B cell (primary cell): ENCODE measurements at regions of chr7 and their contacts with region 1.

Region 1: GRCh38 chr7:21945454-21946227 is at the start of gene CDCA7L:
- DNase-seq: peak; percentile 96
- ATAC-seq: peak; percentile 80
- H3K4me3 ChIP-seq: peak within 1 kb of the TSS; percentile 74 to 95 (median 81)
- H3K4me3 Mint-ChIP-seq: peak within 1 kb of the TSS; percentile 97
- H3K27ac ChIP-seq: peak within 1 kb of the TSS; percentile 97 to 98
- H3K27ac Mint-ChIP-seq: peak within 1 kb of the TSS; percentile 99
- H3K4me1 ChIP-seq: peaks cover 56 to 63% of the 10 kb centered on the region in 2 donors
- H3K4me1 Mint-ChIP-seq: peaks cover 65% of the 10 kb centered on the region
- H3K27me3 ChIP-seq: no peaks in the 10 kb centered on the region
- H3K27me3 Mint-ChIP-seq: no peaks in the 10 kb centered on the region
- CTCF ChIP-seq: peak; percentile 17
- total RNA-seq, gene CDCA7L: 126 and 129 TPM in 2 replicates

Region 2: GRCh38 chr7:21898265-21898930 is 47.2 kb before region 1 on chr7:
- CTCF ChIA-PET with region 1: interaction called, 6 read pairs
- POLR2A ChIA-PET with region 1: interaction called, 14 read pairs
- intact Hi-C with region 1: loop called (anchors 2 kb)
- DNase-seq: peak; percentile 78
- ATAC-seq: peak; percentile 90
- H3K4me3 ChIP-seq: peak overlapping the region; percentile 12 to 55 (median 31)
- H3K4me3 Mint-ChIP-seq: peak overlapping the region; percentile 90
- H3K27ac ChIP-seq: peak overlapping the region; percentile 78 to 96
- H3K27ac Mint-ChIP-seq: peak overlapping the region; percentile 97
- H3K4me1 ChIP-seq: peaks cover 24 to 25% of the 10 kb centered on the region in 2 donors
- H3K4me1 Mint-ChIP-seq: peaks cover 33% of the 10 kb centered on the region
- H3K27me3 ChIP-seq: no peaks in the 10 kb centered on the region
- H3K27me3 Mint-ChIP-seq: no peaks in the 10 kb centered on the region
- CTCF ChIP-seq: no peak

Region 3: DNA sequence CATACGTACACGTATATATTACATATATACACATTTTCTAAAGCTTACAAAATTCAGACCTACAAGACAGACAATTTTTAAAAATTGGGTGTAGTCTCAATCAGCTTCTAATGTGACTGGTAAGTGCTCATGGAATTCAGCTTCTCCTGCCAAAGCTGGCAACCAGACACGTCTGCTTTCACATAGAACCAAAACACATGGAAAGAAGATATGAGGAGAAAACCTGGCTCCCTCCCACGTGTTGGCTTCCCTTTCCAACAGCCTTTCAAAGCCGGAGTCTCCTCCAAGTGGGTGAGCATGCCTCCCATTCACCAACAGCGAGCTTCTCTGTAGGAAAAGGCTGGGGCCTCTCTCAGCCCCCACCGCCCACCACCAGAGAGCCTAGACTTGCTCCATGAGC is 33.3 kb before region 1 on chr7:
- CTCF ChIA-PET with region 1: interaction called, 3 read pairs
- POLR2A ChIA-PET with region 1: interaction called, 7 read pairs
- intact Hi-C with region 1: loop called (anchors 5 kb)
- DNase-seq: no peak
- ATAC-seq: no peak
- H3K4me3 ChIP-seq: no peak overlapping the region
- H3K4me3 Mint-ChIP-seq: no peak overlapping the region
- H3K27ac ChIP-seq: peak overlapping the region in 1 of 2 donors; percentile 64
- H3K27ac Mint-ChIP-seq: peak overlapping the region; percentile 69
- H3K4me1 ChIP-seq: peaks cover 29 to 30% of the 10 kb centered on the region in 2 donors
- H3K4me1 Mint-ChIP-seq: peaks cover 37% of the 10 kb centered on the region
- H3K27me3 ChIP-seq: no peaks in the 10 kb centered on the region
- H3K27me3 Mint-ChIP-seq: no peaks in the 10 kb centered on the region
- CTCF ChIP-seq: no peak

Region 4: DNA sequence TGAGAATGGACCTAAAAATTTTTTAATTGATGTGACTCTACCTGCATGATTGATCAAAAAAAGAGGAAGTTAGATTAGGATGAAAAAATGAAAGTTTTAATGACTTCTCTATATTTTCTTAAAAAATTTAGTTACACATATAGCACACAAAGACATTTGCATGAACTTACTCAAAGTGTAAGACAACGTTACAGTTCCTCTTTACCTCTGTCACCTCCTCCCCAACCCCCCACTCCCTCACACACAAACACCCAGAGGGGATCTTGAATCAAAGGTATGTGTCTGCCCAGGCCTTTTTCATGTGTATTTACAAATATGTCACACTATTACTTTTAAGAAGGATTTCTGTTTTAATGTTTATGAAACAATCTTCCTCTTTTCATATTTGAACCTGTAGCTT is 20.6 kb after region 1 on chr7:
- CTCF ChIA-PET with region 1: interaction called, 5 read pairs
- POLR2A ChIA-PET with region 1: interaction called, 19 read pairs
- intact Hi-C with region 1: loop called (anchors 1 kb)
- DNase-seq: peak; percentile 85
- ATAC-seq: peak; percentile 96
- H3K4me3 ChIP-seq: peak overlapping the region in 1 of 5 experiments; percentile 38
- H3K4me3 Mint-ChIP-seq: peak overlapping the region; percentile 79
- H3K27ac ChIP-seq: peak overlapping the region; percentile 80 to 85
- H3K27ac Mint-ChIP-seq: peak overlapping the region; percentile 93
- H3K4me1 ChIP-seq: peaks cover 52 to 55% of the 10 kb centered on the region in 2 donors
- H3K4me1 Mint-ChIP-seq: peaks cover 58% of the 10 kb centered on the region
- H3K27me3 ChIP-seq: no peaks in the 10 kb centered on the region
- H3K27me3 Mint-ChIP-seq: no peaks in the 10 kb centered on the region
- CTCF ChIP-seq: no peak

Region 5: GRCh38 chr7:21984042-21984441 is 38.4 kb after region 1 on chr7:
- CTCF ChIA-PET with region 1: no interaction called
- POLR2A ChIA-PET with region 1: no interaction called
- intact Hi-C with region 1: no loop called
- DNase-seq: no peak
- ATAC-seq: no peak
- H3K4me3 ChIP-seq: no peak overlapping the region
- H3K4me3 Mint-ChIP-seq: no peak overlapping the region
- H3K27ac ChIP-seq: no peak overlapping the region
- H3K27ac Mint-ChIP-seq: no peak overlapping the region
- H3K4me1 ChIP-seq: no peaks in the 10 kb centered on the region
- H3K4me1 Mint-ChIP-seq: no peaks in the 10 kb centered on the region
- H3K27me3 ChIP-seq: no peaks in the 10 kb centered on the region
- H3K27me3 Mint-ChIP-seq: no peaks in the 10 kb centered on the region
- CTCF ChIP-seq: no peak

Region 6: DNA sequence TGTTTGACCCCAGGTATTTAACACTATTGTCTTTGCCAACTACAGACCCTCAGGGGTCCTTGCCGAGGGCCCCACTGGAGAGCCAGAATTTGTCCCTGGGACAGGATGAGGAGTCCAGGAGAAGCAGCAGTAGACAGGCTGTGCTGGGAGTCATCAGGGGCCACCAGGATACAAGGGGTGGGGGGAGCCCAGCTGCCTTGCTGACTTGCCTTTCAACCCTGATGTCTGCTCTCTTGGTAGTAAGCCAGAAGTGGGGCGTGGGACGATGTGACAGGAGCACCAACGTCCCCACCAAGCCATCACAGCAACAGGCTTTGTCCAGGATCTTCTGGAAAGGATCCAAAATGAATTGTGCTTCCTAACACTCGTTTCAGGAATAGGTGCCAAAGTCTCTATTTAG is 62.4 kb after region 1 on chr7:
- CTCF ChIA-PET with region 1: no interaction called
- POLR2A ChIA-PET with region 1: no interaction called
- intact Hi-C with region 1: no loop called
- DNase-seq: no peak
- ATAC-seq: no peak
- H3K4me3 ChIP-seq: no peak overlapping the region
- H3K4me3 Mint-ChIP-seq: no peak overlapping the region
- H3K27ac ChIP-seq: no peak overlapping the region
- H3K27ac Mint-ChIP-seq: no peak overlapping the region
- H3K4me1 ChIP-seq: no peaks in the 10 kb centered on the region
- H3K4me1 Mint-ChIP-seq: no peaks in the 10 kb centered on the region
- H3K27me3 ChIP-seq: peaks cover 0 to 3% (median 0%) of the 10 kb centered on the region in 4 experiments
- H3K27me3 Mint-ChIP-seq: peaks cover 28% of the 10 kb centered on the region
- CTCF ChIP-seq: no peak

Region 7: GRCh38 chr7:22082886-22083703 is 137.5 kb after region 1 on chr7:
- CTCF ChIA-PET with region 1: interaction called, 9 read pairs
- POLR2A ChIA-PET with region 1: interaction called, 3 read pairs
- intact Hi-C with region 1: loop called (anchors 10 kb)
- DNase-seq: peak; percentile 92
- ATAC-seq: peak; percentile 97
- H3K4me3 ChIP-seq: peak overlapping the region; percentile 58 to 80 (median 72)
- H3K4me3 Mint-ChIP-seq: peak overlapping the region; percentile 94
- H3K27ac ChIP-seq: peak overlapping the region; percentile 63 to 68
- H3K27ac Mint-ChIP-seq: peak overlapping the region; percentile 90
- H3K4me1 ChIP-seq: peaks cover 8 to 14% of the 10 kb centered on the region in 2 donors
- H3K4me1 Mint-ChIP-seq: peaks cover 18% of the 10 kb centered on the region
- H3K27me3 ChIP-seq: peaks cover 0 to 11% (median 7%) of the 10 kb centered on the region in 4 experiments
- H3K27me3 Mint-ChIP-seq: peaks cover 25% of the 10 kb centered on the region
- CTCF ChIP-seq: peak; percentile 98